Activated T-helper 2 cell treated with anti-CD3 and anti-CD28 coated beads, Interferon-gamma antibody, Interleukin-2, Interleukin-4, amounts not matched to agents 10 μg/mL and 5 μg/mL and 100 μg/mL, durations not matched to agents 14 hours and 24 hours and 36 hours (primary cell): ENCODE measurements at regions of chr12 and their contacts with region 1.

Region 1: DNA sequence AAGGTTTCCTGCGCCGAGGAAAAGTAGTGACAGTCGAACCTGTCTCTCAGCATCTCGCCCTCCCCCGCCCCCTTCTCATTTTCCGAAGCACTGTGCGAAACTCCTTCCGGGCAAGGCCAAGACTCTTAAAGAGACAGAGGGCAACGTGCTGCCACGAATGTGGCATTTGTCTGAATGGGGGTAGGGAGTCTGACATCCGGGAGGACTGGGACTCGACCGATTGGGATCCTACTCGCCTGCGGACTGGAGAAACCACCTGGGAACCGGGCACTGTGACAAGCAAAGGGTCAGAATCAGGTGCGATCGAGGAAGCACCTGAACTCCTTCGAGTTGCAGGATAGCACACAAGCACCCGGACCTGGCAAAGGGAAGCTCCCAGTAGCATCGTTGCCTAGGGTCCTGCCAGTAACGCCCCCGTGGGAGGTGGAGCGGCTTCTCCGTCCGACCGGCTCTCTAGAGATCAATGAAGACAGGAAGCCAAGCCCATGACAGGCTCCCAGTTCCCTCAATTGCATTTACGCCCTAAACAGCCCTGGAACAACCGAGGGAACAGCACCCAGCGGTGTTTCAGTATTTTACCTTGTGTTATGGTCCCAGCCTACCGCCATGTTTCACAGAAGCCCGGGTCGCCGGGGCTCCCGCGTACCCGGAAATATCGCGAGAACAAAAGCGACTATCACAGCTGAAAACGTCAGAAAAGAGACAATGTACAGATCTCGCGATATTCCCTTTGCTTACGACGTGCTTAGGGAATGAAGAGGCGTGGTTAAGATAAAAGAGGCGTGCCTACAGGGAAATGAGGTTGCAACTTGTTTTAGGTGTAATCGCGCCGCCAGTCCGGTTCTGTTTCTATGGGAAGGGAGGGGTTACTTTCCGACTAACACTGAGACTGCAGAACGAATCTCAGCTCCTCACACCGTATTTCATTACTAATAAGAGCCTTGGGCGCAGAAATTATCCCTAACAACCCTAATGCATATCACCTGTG is at the start of gene ERGIC2:
- DNase-seq: peak; percentile 88
- H3K4me3 Mint-ChIP-seq: peak within 1 kb of the TSS; percentile 91
- H3K27ac Mint-ChIP-seq: peak within 1 kb of the TSS; percentile 92
- H3K4me1 Mint-ChIP-seq: peaks cover 33% of the 10 kb centered on the region
- H3K27me3 Mint-ChIP-seq: peaks cover 2% of the 10 kb centered on the region
- total RNA-seq, gene ERGIC2: 88.7 and 91.5 TPM in 2 replicates

Region 2: GRCh38 chr12:29148911-29149690 is 231.7 kb before region 1 on chr12 and contains the start of gene FAR2:
- intact Hi-C with region 1: no loop called
- DNase-seq: peak; percentile 33
- H3K4me3 Mint-ChIP-seq: peak within 1 kb of the TSS; percentile 83
- H3K27ac Mint-ChIP-seq: peak within 1 kb of the TSS; percentile 64
- H3K4me1 Mint-ChIP-seq: peaks cover 20% of the 10 kb centered on the region
- H3K27me3 Mint-ChIP-seq: peaks cover 68% of the 10 kb centered on the region
- total RNA-seq, gene FAR2: 3.8 and 4.3 TPM in 2 replicates

Region 3: GRCh38 chr12:29346769-29347421 is 33.9 kb before region 1 on chr12:
- intact Hi-C with region 1: loop called (anchors 1 kb)
- DNase-seq: no peak
- H3K4me3 Mint-ChIP-seq: no peak overlapping the region
- H3K27ac Mint-ChIP-seq: no peak overlapping the region
- H3K4me1 Mint-ChIP-seq: peaks cover 5% of the 10 kb centered on the region
- H3K27me3 Mint-ChIP-seq: no peaks in the 10 kb centered on the region

Region 4: GRCh38 chr12:29365091-29365490 is 15.7 kb before region 1 on chr12:
- intact Hi-C with region 1: no loop called
- DNase-seq: no peak
- H3K4me3 Mint-ChIP-seq: no peak overlapping the region
- H3K27ac Mint-ChIP-seq: no peak overlapping the region
- H3K4me1 Mint-ChIP-seq: no peaks in the 10 kb centered on the region
- H3K27me3 Mint-ChIP-seq: no peaks in the 10 kb centered on the region

Region 5: GRCh38 chr12:30695199-30696103 is 1314.6 kb after region 1 on chr12 and contains the start of gene IPO8:
- intact Hi-C with region 1: loop called (anchors 5 kb)
- DNase-seq: peak; percentile 75
- H3K4me3 Mint-ChIP-seq: peak within 1 kb of the TSS; percentile 91
- H3K27ac Mint-ChIP-seq: peak within 1 kb of the TSS; percentile 88
- H3K4me1 Mint-ChIP-seq: peaks cover 30% of the 10 kb centered on the region
- H3K27me3 Mint-ChIP-seq: peaks cover 8% of the 10 kb centered on the region
- total RNA-seq, gene IPO8: 40.1 and 44.3 TPM in 2 replicates